ENCODE measurements at regions of chr2 and their contacts with region 1.

Region 1: GRCh38 chr2:24792874-24793760 is at the starts of genes CENPO and PTRHD1:
- DNase-seq: peak; percentile 92
- H3K4me3 Mint-ChIP-seq: peak within 1 kb of the TSS; percentile 95
- H3K27ac Mint-ChIP-seq: peak within 1 kb of the TSS; percentile 99
- H3K4me1 Mint-ChIP-seq: peaks cover 47% of the 10 kb centered on the region
- H3K27me3 Mint-ChIP-seq: peaks cover 1% of the 10 kb centered on the region
- total RNA-seq, gene CENPO: 44.7 and 48.3 TPM in 2 replicates
- total RNA-seq, gene PTRHD1: 16.5 and 17.3 TPM in 2 replicates

Region 2: GRCh38 chr2:24613154-24613814 is 179.8 kb before region 1 on chr2:
- intact Hi-C with region 1: loop called (anchors 10 kb)
- DNase-seq: peak; percentile 32
- H3K4me3 Mint-ChIP-seq: no peak overlapping the region
- H3K27ac Mint-ChIP-seq: peak overlapping the region; percentile 81
- H3K4me1 Mint-ChIP-seq: peaks cover 7% of the 10 kb centered on the region
- H3K27me3 Mint-ChIP-seq: no peaks in the 10 kb centered on the region

Region 3: GRCh38 chr2:24626131-24626530 is 167.0 kb before region 1 on chr2:
- intact Hi-C with region 1: no loop called
- DNase-seq: no peak
- H3K4me3 Mint-ChIP-seq: no peak overlapping the region
- H3K27ac Mint-ChIP-seq: no peak overlapping the region
- H3K4me1 Mint-ChIP-seq: peaks cover 4% of the 10 kb centered on the region
- H3K27me3 Mint-ChIP-seq: peaks cover 2% of the 10 kb centered on the region

Region 4: DNA sequence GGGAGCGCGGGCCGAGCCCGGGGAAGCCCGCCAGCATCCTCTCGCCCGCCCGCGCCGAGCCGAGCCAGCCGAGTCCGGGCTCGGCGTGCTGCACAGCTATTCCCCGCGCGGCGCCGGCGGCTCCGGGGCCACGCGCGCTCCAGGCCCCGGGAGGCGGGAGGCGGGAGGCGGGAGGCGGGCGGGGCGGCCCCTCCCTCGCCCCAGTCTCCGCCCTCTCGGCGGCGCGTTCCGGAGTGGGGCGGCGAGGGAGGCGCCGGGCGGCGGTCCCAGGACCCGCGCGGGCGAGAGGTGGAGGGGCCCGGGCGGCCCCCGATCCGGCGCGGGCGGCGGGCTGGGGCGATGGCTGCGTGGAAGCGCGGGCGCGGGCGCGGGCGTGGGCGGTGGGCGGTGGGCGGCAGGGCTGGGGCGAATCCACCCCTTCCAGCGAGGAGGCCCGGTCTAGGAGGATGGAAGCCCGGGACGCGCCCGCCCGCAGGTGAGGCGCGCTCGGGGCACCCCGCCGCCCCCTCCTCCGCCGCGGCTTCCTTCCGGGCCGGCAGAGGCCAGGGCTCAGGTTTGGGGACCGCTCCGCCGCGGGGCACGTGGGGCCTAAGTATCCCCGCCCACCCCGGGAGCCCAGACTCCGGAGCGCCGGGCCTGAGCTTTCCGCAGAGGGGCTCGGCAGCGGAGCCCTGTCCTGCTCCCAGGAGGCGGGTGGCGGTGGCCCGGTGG is 127.1 kb after region 1 on chr2 and contains the start of gene ADCY3:
- intact Hi-C with region 1: loop called (anchors 2 kb)
- DNase-seq: peak; percentile 49
- H3K4me3 Mint-ChIP-seq: peak within 1 kb of the TSS; percentile 93
- H3K27ac Mint-ChIP-seq: peak within 1 kb of the TSS; percentile 90
- H3K4me1 Mint-ChIP-seq: peaks cover 32% of the 10 kb centered on the region
- H3K27me3 Mint-ChIP-seq: peaks cover 2% of the 10 kb centered on the region
- total RNA-seq, gene ADCY3: 101 and 108 TPM in 2 replicates